Endothelial cell of umbilical vein (primary cell): ENCODE measurements at regions of chr22 and their contacts with region 1.

Region 1: GRCh38 chr22:19568337-19569275 is 44.4 kb upstream of the CLDN5 start:
- DNase-seq: peak; percentile 45
- H3K4me3 ChIP-seq: no peak overlapping the region
- H3K27ac ChIP-seq: peak overlapping the region; percentile 88
- H3K4me1 ChIP-seq: peaks cover 50% of the 10 kb centered on the region
- H3K27me3 ChIP-seq: no peaks in the 10 kb centered on the region
- CTCF ChIP-seq: no peak
- POLR2A ChIP-seq: no peak

Region 2: DNA sequence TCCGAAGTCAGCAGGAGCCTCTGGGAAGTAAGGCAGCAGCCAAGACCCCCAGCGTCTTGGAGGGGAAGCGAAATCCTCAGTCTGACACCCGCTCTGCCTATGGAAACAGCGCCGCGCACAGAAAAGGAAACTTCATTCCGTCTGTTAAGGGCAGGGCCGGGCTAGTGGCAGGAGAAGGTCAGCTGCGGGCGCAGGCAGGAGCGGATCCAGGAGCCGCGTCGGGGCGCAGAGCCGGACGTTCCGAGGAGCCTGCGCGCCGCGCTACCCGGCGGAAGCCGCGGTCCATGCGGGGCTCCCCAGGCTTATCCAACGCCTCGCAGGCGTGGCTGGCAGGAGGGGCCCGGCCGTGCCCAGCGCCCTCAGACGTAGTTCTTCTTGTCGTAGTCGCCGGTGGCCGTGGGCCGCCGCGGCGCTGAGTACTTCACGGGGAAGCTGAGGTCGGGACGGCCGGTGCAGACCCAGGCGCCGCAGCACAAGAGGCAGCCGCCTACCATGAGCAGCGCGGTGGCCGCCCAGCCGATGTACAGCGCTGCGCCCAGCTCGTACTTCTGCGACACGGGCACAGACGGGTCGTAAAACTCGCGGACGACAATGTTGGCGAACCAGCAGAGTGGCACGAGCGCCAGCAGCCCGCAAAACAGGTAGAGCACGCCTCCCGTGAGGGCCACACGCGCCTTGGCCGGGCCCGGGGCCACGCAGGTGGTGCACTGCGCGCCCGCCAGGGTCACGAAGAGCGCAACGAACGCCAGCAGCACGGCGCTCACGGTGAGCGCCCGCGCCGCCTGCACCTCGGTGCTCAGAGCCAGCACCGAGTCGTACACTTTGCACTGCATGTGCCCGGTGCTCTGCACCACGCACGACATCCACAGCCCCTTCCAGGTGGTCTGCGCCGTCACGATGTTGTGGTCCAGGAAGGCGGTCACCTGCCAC is 45.1 kb before region 1 on chr22:
- CTCF ChIA-PET with region 1: interaction called, 3 read pairs
- POLR2A ChIA-PET with region 1: no interaction called
- dilution Hi-C with region 1: no loop called
- intact Hi-C with region 1: loop called (anchors 1 kb)
- DNase-seq: peak; percentile 60
- H3K4me3 ChIP-seq: peak overlapping the region; percentile 53 to 75 (median 61)
- H3K27ac ChIP-seq: peak overlapping the region; percentile 55
- H3K4me1 ChIP-seq: peaks cover 44% of the 10 kb centered on the region
- H3K27me3 ChIP-seq: no peaks in the 10 kb centered on the region
- CTCF ChIP-seq: no peak
- POLR2A ChIP-seq: peak; percentile 48

Region 3: GRCh38 chr22:19554834-19555404 is 13.7 kb before region 1 on chr22:
- CTCF ChIA-PET with region 1: interaction called, 12 read pairs
- POLR2A ChIA-PET with region 1: interaction called, 3 read pairs
- dilution Hi-C with region 1: no loop called
- intact Hi-C with region 1: no loop called
- DNase-seq: peak; percentile 73
- H3K4me3 ChIP-seq: no peak overlapping the region
- H3K27ac ChIP-seq: no peak overlapping the region
- H3K4me1 ChIP-seq: peaks cover 7% of the 10 kb centered on the region
- H3K27me3 ChIP-seq: no peaks in the 10 kb centered on the region
- CTCF ChIP-seq: peak; percentile 13 to 34
- POLR2A ChIP-seq: no peak